AG04450 (cell line): ENCODE measurements at regions of chr12 and their contacts with region 1.

Region 1: DNA sequence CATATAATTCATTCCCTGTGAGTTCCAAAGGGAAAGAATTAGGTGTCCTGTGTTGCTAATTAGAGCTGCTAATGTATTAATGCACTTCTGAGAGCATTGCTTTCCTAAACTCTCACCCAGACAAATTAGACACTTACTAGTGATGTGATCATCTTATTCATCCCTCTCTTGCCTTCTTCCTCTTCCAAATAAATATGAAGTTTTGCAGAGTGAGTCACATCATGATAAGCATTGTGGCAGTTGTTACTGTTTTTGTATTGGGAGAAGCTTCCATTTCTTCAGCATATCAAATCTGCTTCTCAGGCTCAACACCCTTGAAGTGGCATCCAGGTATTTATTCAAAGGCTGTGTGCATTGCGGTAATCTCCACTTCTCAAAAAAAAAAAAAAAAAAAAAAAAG is 37.3 kb upstream of the E2F7 start:
- DNase-seq: no peak
- H3K4me3 ChIP-seq: no peak overlapping the region
- H3K27ac ChIP-seq: no peak overlapping the region
- H3K27me3 ChIP-seq: no peaks in the 10 kb centered on the region
- CTCF ChIP-seq: no peak

Region 2: DNA sequence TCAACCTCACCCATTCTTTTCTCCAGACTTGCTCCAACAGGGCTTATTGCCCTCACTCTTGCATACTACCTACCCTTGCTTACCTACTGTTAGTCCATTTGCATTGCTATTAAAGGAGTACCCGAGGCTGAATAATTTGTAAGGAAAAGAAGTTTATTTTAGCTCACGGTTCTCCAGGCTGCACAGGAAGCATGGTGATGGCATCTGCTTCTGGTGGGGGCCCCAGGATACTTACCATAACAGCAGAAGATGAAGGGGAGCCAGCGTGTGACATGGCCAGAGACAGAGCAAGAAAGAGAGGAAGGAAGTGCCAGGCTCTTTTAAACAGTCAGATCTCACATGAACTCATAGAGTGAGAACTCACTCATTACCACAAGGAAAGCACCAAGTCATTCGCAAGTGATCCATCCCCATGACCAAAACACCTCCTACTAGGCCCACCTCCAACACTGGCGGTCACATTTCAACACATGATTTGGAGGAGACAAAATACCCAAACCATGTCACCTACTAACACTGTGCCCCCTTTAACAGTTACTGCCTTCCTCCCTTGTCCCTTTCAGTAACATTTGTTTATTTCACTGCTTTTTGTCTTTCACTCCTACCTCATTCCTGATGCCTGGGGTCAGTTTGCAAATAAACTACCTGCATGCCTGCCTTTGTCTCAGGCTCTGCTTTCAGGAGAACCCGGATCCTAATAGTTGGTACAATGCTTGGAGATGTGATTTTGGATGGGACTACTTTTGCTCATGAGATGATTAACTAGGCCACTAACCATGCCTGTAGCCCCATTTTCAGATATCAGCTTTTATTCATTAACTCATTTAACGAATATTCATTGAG is 182.3 kb before region 1 on chr12:
- CTCF ChIA-PET with region 1: no interaction called
- POLR2A ChIA-PET with region 1: no interaction called
- DNase-seq: no peak
- H3K4me3 ChIP-seq: no peak overlapping the region
- H3K27ac ChIP-seq: no peak overlapping the region
- H3K27me3 ChIP-seq: no peaks in the 10 kb centered on the region
- CTCF ChIP-seq: no peak

Region 3: GRCh38 chr12:77087427-77087826 is 15.3 kb before region 1 on chr12:
- CTCF ChIA-PET with region 1: no interaction called
- POLR2A ChIA-PET with region 1: interaction called, 16 read pairs
- DNase-seq: peak; percentile 82
- H3K4me3 ChIP-seq: no peak overlapping the region
- H3K27ac ChIP-seq: no peak overlapping the region
- H3K27me3 ChIP-seq: no peaks in the 10 kb centered on the region
- CTCF ChIP-seq: no peak

Region 4: DNA sequence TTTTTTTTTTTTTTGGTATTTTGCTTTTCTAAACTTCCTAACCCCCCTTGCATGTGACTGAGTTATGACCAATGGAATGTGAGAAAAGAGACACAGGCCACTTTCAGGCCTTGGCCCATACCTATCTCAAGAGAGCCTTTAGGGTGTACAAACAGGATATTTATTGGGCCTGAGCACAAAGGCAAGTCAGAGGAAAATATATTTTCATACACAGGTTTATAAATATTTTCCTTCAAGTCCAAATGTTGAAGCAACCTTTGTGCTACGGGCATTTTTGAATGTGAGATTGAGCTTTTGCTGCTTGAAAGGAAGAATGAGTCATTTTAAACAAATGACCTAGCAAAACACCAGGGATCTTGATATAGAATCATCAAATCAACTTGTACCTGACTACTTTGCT is 191.3 kb after region 1 on chr12:
- CTCF ChIA-PET with region 1: no interaction called
- POLR2A ChIA-PET with region 1: interaction called, 11 read pairs
- DNase-seq: no peak
- H3K4me3 ChIP-seq: no peak overlapping the region
- H3K27ac ChIP-seq: peak overlapping the region; percentile 42
- H3K27me3 ChIP-seq: no peaks in the 10 kb centered on the region
- CTCF ChIP-seq: no peak